Adrenal gland (tissue), 19 donors: ENCODE measurements at regions of chr2 and their contacts with region 1.

Region 1: DNA sequence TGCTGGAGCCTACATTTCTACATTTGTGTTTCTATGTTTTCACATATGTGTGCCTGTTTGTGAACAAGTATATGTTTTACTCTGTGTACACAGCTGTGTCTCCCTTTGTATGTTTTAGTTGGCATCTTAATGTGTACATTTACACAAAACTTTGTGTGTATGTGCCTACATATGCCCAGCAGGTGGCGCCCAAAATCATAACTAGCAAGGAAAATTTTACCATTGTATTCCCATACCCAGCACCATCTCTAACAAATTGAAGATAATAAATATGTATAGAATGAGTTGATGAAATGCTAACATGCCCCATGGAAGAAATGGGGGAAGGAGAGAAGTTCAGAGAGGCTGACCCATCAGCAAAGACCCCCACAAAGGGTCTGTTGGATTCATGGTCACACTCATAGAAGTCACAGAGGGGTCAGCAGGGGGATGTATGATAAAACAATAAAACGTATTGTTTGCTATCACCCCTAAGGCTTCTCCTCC is 48.1 kb downstream of the PKDCC start:
- DNase-seq: peak; percentile 60 to 94 (median 85)
- H3K4me3 ChIP-seq: no peak overlapping the region
- H3K27ac ChIP-seq: no peak overlapping the region
- H3K4me1 ChIP-seq: peaks cover 9 to 17% of the 10 kb centered on the region in 2 donors
- H3K27me3 ChIP-seq: no peaks in the 10 kb centered on the region
- CTCF ChIP-seq: peak; percentile 87 to 95 (median 90)
- POLR2A ChIP-seq: no peak

Region 2: GRCh38 chr2:42238644-42239288 is 142.8 kb after region 1 on chr2:
- intact Hi-C with region 1: loop called (anchors 5 to 10 kb)
- DNase-seq: peak; percentile 42 to 71 (median 58)
- H3K4me3 ChIP-seq: peak overlapping the region in 1 of 4 donors; percentile 5
- H3K27ac ChIP-seq: no peak overlapping the region
- H3K4me1 ChIP-seq: peaks cover 13 to 20% of the 10 kb centered on the region in 2 donors
- H3K27me3 ChIP-seq: no peaks in the 10 kb centered on the region
- CTCF ChIP-seq: peak in 5 of 6 experiments; percentile 38 to 68 (median 63)
- POLR2A ChIP-seq: no peak

Region 3: GRCh38 chr2:42328148-42328833 is 232.3 kb after region 1 on chr2:
- intact Hi-C with region 1: loop called (anchors 5 to 10 kb)
- DNase-seq: no peak
- H3K4me3 ChIP-seq: no peak overlapping the region
- H3K27ac ChIP-seq: no peak overlapping the region
- H3K4me1 ChIP-seq: peaks cover 6 to 15% of the 10 kb centered on the region in 2 donors
- H3K27me3 ChIP-seq: no peaks in the 10 kb centered on the region
- CTCF ChIP-seq: peak; percentile 24 to 65 (median 46)
- POLR2A ChIP-seq: no peak

Region 4: GRCh38 chr2:42359965-42360483 is 264.1 kb after region 1 on chr2:
- intact Hi-C with region 1: loop called in 1 of 2 experiments (anchors 10 kb)
- DNase-seq: peak in 1 of 7 donors; percentile 44
- H3K4me3 ChIP-seq: peak overlapping the region in 3 of 4 donors; percentile 89 to 97 (median 96)
- H3K27ac ChIP-seq: peak overlapping the region; percentile 18 to 99 (median 98)
- H3K4me1 ChIP-seq: peaks cover 20 to 44% of the 10 kb centered on the region in 2 donors
- H3K27me3 ChIP-seq: no peaks in the 10 kb centered on the region
- CTCF ChIP-seq: no peak
- POLR2A ChIP-seq: peak in 1 of 2 donors; percentile 34

Region 5: DNA sequence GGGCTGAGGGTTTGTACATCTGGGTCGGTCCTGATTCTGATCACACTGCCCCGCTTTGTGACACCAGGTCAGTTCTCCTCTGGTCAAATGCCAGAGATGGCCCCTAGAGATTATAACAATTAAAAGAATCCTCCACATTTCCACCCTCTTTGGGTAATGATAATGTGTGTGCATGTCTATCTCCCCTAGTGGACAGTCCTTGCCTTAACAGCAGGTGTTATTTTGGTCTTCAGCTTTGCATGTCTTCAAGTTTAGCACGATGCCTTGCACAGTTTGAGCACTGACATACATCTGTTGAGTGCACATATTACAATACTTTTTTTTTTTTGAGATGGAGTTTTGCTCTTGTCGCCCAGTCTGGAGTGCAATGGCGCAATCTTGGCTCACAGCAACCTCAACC is 290.7 kb after region 1 on chr2:
- intact Hi-C with region 1: no loop called
- DNase-seq: no peak
- H3K4me3 ChIP-seq: no peak overlapping the region
- H3K27ac ChIP-seq: no peak overlapping the region
- H3K4me1 ChIP-seq: no peaks in the 10 kb centered on the region
- H3K27me3 ChIP-seq: no peaks in the 10 kb centered on the region
- CTCF ChIP-seq: peak in 5 of 6 experiments; percentile 16 to 40 (median 22)
- POLR2A ChIP-seq: no peak